ENCODE measurements at regions of chr3 and their contacts with region 1.

Region 1: GRCh38 chr3:140134231-140134965 is 199.4 kb downstream of the CLSTN2 start:
- DNase-seq: no peak
- ATAC-seq: no peak
- H3K4me3 ChIP-seq: no peak overlapping the region
- H3K27ac ChIP-seq: no peak overlapping the region
- H3K4me1 ChIP-seq: no peaks in the 10 kb centered on the region
- H3K27me3 ChIP-seq: peaks cover 0 to 7% (median 0%) of the 10 kb centered on the region in 9 donors
- CTCF ChIP-seq: no peak
- POLR2A ChIP-seq: no peak

Region 2: DNA sequence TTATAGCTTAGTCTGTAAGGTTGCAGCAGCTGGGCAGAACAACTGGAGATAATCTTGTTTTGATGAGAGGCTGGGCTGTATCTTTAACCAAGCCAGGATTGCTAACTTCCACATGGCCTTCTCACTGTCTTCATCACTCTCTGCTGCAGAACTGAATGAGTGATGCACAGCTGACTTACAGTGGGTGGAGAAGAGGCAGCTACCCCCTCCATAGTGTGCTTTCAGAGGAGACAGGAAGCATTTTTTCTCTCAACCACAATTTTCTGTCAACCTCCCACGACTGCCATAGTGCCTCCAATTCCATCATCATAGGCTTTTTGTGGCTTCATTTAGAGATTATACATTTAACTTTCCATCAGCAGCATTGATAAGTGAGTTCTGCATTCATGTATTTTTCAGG is 31.2 kb before region 1 on chr3:
- intact Hi-C with region 1: no loop called
- DNase-seq: no peak
- ATAC-seq: no peak
- H3K4me3 ChIP-seq: no peak overlapping the region
- H3K27ac ChIP-seq: no peak overlapping the region
- H3K4me1 ChIP-seq: no peaks in the 10 kb centered on the region
- H3K27me3 ChIP-seq: no peaks in the 10 kb centered on the region
- CTCF ChIP-seq: no peak
- POLR2A ChIP-seq: no peak

Region 3: GRCh38 chr3:140206196-140207048 is 72.0 kb after region 1 on chr3:
- intact Hi-C with region 1: loop called in 4 of 10 experiments (anchors 5 to 10 kb)
- DNase-seq: peak in 1 of 5 donors; percentile 29
- ATAC-seq: peak; percentile 61 to 76 (median 67)
- H3K4me3 ChIP-seq: no peak overlapping the region
- H3K27ac ChIP-seq: no peak overlapping the region
- H3K4me1 ChIP-seq: peaks cover 0 to 6% (median 0%) of the 10 kb centered on the region in 12 donors
- H3K27me3 ChIP-seq: no peaks in the 10 kb centered on the region
- CTCF ChIP-seq: peak in 9 of 12 donors; percentile 18 to 41 (median 33)
- POLR2A ChIP-seq: no peak

Region 4: DNA sequence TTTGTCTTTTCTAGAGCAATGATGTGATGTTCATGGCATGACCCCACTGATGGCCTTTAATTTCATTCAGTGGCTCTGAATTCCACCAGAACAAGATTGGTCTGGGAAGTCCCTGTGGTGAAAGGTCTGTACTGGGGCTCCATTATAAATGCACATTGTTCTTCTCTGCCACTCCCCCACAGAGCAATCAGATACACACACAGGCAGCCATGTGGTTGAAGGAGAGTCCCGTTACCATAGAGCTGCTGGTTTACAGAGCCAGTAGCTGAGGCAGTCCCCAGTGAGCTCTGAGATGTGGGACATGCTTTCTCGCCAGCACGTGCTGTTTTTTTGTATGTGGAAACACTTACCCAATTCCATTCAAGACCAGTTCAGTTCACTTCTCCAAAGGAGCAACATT is 370.8 kb after region 1 on chr3:
- intact Hi-C with region 1: loop called in 2 of 10 experiments (anchors 5 to 10 kb)
- DNase-seq: peak in 1 of 5 donors; percentile 36
- ATAC-seq: peak; percentile 50 to 62 (median 56)
- H3K4me3 ChIP-seq: no peak overlapping the region
- H3K27ac ChIP-seq: no peak overlapping the region
- H3K4me1 ChIP-seq: peaks cover 0 to 16% (median 0%) of the 10 kb centered on the region in 12 donors
- H3K27me3 ChIP-seq: peaks cover 0 to 7% (median 0%) of the 10 kb centered on the region in 9 donors
- CTCF ChIP-seq: no peak
- POLR2A ChIP-seq: no peak

Measured in heart left ventricle (tissue), 16 donors.